Psoas muscle (tissue), 8 donors: ENCODE measurements at regions of chr18 and their contacts with region 1.

Region 1: GRCh38 chr18:6013171-6013810 is 118.0 kb upstream of the TMEM200C start:
- DNase-seq: no peak
- ATAC-seq: no peak
- H3K4me3 ChIP-seq: no peak overlapping the region
- H3K27ac ChIP-seq: no peak overlapping the region
- H3K4me1 ChIP-seq: no peaks in the 10 kb centered on the region
- H3K27me3 ChIP-seq: no peaks in the 10 kb centered on the region
- CTCF ChIP-seq: no peak

Region 2: DNA sequence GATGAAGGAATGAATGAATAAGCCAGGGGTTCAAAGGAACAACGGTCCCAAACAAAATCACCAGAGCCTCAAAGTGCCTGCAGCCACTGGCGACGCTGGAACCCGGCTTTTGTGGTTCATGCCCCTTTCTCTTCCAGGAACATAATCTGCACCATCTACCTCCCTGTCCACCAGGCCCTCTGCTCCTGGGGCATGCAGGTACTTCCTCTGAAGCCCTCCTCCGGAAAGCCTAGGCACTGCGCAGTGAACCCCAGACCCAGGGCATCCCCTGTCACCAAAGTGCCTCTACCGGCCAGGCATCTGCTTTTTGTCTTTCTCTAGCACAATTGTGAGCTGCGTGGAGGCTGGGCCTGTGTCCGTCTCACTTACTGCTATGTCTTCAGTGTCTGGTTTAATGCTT is 19.4 kb before region 1 on chr18:
- intact Hi-C with region 1: loop called in 1 of 2 experiments (anchors 2 kb)
- DNase-seq: no peak
- ATAC-seq: no peak
- H3K4me3 ChIP-seq: no peak overlapping the region
- H3K27ac ChIP-seq: no peak overlapping the region
- H3K4me1 ChIP-seq: no peaks in the 10 kb centered on the region
- H3K27me3 ChIP-seq: no peaks in the 10 kb centered on the region
- CTCF ChIP-seq: no peak

Region 3: DNA sequence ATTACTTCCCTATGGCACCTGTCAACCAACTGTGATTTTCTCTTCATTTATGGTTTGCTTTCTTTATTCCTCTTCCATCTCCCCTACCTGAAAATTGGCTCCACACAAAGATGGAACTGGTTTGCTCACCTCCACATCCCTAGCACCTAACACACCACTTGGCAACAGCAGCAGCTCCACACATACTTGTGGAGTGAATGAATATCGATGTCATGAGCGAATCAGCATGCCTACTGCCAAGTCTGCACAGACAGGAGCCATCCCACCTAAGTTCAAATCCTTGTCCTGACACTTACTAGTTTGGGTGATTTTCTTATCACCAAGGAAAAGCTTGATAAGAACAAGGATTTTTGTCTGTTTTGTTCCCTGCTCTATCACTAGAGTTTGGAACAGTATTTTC is 73.4 kb after region 1 on chr18:
- intact Hi-C with region 1: no loop called
- DNase-seq: no peak
- ATAC-seq: no peak
- H3K4me3 ChIP-seq: no peak overlapping the region
- H3K27ac ChIP-seq: no peak overlapping the region
- H3K4me1 ChIP-seq: no peaks in the 10 kb centered on the region
- H3K27me3 ChIP-seq: no peaks in the 10 kb centered on the region
- CTCF ChIP-seq: no peak

Region 4: GRCh38 chr18:6203791-6204190 is 190.5 kb after region 1 on chr18:
- intact Hi-C with region 1: no loop called
- DNase-seq: no peak
- ATAC-seq: no peak
- H3K4me3 ChIP-seq: no peak overlapping the region
- H3K27ac ChIP-seq: no peak overlapping the region
- H3K4me1 ChIP-seq: no peaks in the 10 kb centered on the region
- H3K27me3 ChIP-seq: no peaks in the 10 kb centered on the region
- CTCF ChIP-seq: no peak